Colonic mucosa (tissue), 4 donors: ENCODE measurements at regions of chr1 and their contacts with region 1.

Region 1: GRCh38 chr1:50368179-50369012 is 54.8 kb downstream of the DMRTA2 start:
- DNase-seq: peak; percentile 48
- H3K4me3 ChIP-seq: no peak overlapping the region
- H3K27ac ChIP-seq: no peak overlapping the region
- H3K4me1 ChIP-seq: no peaks in the 10 kb centered on the region
- H3K27me3 ChIP-seq: peaks cover 7% of the 10 kb centered on the region
- CTCF ChIP-seq: peak; percentile 58

Region 2: DNA sequence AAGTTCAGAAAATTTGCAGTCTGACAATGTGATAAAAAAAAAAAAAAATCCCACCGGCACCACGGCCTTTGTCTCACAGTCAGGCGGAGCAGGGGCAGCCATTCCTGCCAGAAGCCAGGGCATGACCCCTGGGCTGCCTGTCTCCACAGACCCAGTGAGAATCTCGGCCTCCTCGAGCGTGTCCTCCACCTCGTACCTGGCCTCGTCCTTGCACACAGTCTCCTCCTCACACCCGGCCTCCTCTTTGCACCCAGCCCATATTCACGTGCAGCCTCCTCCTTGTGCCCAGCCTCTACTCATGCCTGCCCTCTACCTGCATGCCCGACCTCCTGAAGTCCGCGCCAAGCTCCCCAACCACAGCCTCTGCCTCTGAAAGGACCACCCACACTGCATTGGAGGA is 526.6 kb before region 1 on chr1:
- intact Hi-C with region 1: no loop called
- DNase-seq: no peak
- H3K4me3 ChIP-seq: no peak overlapping the region
- H3K27ac ChIP-seq: no peak overlapping the region
- H3K4me1 ChIP-seq: no peaks in the 10 kb centered on the region
- H3K27me3 ChIP-seq: no peaks in the 10 kb centered on the region
- CTCF ChIP-seq: no peak

Region 3: DNA sequence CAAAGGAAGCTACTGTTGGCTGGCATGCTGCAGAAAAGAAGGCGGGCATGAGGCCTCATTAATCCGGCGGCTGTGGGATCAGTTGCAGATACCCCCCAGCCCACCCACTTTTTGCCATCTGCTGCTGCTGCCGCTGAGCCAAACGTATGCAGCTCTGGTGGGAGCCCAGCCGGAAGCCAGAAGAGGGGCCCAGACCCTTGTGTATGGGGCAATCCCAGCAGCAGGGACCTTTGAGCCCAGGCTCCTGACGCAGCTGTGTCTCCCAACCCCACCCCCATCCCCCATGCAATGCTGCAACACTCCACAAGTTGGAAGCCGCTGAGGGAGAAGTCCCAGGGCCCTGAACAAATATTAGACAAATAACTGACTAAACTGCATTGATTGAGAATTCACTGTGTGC is 153.7 kb before region 1 on chr1:
- intact Hi-C with region 1: no loop called
- DNase-seq: no peak
- H3K4me3 ChIP-seq: no peak overlapping the region
- H3K27ac ChIP-seq: no peak overlapping the region
- H3K4me1 ChIP-seq: no peaks in the 10 kb centered on the region
- H3K27me3 ChIP-seq: no peaks in the 10 kb centered on the region
- CTCF ChIP-seq: no peak

Region 4: DNA sequence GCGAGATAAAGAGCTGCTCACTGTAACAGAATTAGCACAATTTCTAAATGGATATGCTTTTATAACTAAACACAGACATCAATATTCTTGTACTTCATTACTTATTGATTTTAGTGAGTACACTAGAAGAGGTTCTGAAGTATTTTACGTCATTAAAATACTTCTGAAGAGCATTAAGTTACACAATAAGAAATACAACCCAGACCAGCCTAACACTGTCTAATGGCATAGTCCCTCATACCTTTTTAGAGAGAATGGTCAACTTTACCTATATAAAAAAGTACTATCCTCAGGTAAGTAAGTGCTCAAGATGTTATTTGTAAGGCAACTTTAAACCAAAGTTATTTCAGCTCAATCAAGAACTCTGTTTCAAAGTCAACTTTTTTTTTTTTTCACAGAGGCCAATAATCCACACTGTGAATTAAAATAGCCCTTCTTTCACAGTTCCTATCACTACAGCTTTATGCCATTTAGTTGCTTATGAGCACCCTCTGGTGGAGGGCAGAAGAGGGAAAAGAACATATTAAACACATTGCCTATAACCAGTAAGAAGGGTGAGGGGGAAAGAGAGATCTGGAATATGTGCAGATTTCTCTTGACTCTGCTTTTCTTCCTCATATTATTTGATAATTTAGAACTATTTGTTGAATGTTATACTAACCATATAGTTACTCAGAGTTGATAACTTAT is 236.9 kb after region 1 on chr1:
- intact Hi-C with region 1: loop called (anchors 1 kb)
- DNase-seq: peak; percentile 34
- H3K4me3 ChIP-seq: no peak overlapping the region
- H3K27ac ChIP-seq: no peak overlapping the region
- H3K4me1 ChIP-seq: no peaks in the 10 kb centered on the region
- H3K27me3 ChIP-seq: no peaks in the 10 kb centered on the region
- CTCF ChIP-seq: peak; percentile 40